Posterior cingulate gyrus (tissue), 11 donors: ENCODE measurements at regions of chr3 and their contacts with region 1.

Region 1: GRCh38 chr3:25257026-25257425 is 171.0 kb upstream of the RARB start:
- DNase-seq: no peak

Region 2: DNA sequence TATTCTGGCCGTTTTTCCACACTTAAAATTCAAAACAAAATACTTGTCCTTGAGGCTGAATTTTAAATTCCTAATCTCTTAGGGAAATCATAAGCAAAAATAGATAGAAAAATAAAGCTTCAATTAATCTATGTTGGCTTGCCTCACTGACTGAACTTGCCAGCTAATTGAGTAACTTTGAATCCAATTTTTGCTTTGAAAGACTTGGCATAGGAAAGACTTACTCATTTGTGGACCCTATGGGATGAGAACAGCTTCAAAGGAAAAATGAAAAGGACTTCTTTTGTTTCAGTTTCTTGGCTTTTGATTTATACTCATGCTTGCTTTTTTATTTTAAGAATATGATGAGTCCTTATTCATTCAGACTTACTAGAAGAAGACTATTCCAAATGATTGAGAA is 199.6 kb before region 1 on chr3:
- intact Hi-C with region 1: no loop called
- DNase-seq: no peak

Region 3: DNA sequence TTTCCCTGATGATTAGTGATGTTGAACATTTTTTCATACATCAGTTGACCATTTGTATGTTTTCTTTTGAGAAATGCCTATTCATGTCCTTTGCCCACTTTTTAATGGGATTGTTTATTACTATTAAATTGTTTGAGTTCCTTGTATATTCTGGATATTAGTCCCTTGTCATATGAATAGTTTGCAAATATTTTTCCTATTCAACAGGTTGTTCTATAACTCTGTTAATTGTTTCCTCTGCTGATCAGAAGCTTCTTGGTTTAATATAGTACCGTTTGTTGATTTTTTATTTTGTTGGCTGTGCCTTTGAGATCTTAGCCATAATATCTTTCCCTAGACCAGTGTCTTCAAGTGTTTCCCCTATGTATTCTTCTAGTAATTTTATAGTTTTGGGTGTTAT is 18.0 kb before region 1 on chr3:
- intact Hi-C with region 1: loop called (anchors 1 kb)
- DNase-seq: no peak